ENCODE measurements at regions of chr13 and their contacts with region 1.

Region 1: DNA sequence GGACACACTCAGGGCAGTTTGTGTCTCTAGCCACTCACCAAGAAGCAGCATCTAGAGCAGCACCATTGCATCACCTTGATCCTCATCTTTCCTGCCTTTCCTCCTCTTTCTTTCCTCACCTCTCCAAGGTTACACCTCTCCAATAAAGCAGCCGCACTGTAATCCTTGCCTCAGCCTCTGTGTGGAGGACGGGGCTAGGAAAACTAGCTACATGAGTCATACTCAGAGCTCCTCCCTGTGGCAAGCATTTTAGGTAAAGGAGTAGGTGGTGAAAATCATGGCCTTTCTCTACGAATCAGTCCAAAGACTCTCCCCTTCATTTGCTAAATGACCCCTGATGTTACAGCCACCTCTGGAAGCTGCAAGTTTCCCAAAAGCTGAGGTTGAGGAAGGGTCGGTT is 108.9 kb downstream of the DNAJC15 start:
- DNase-seq: peak in 1 of 2 donors; percentile 21
- ATAC-seq: peak; percentile 28 to 84 (median 68)
- H3K4me3 ChIP-seq: no peak overlapping the region
- H3K27ac ChIP-seq: no peak overlapping the region
- H3K4me1 ChIP-seq: peaks cover 4 to 18% (median 9%) of the 10 kb centered on the region in 9 donors
- H3K27me3 ChIP-seq: peaks cover 0 to 8% (median 3%) of the 10 kb centered on the region in 7 donors
- CTCF ChIP-seq: peak in 8 of 9 donors; percentile 17 to 67 (median 47)

Region 2: GRCh38 chr13:42602906-42603305 is 529.4 kb before region 1 on chr13:
- intact Hi-C with region 1: loop called in 2 of 10 experiments (anchors 10 kb)
- DNase-seq: no peak
- ATAC-seq: no peak
- H3K4me3 ChIP-seq: no peak overlapping the region
- H3K27ac ChIP-seq: no peak overlapping the region
- H3K4me1 ChIP-seq: no peaks in the 10 kb centered on the region
- H3K27me3 ChIP-seq: peaks cover 0 to 16% (median 0%) of the 10 kb centered on the region in 7 donors
- CTCF ChIP-seq: no peak

Region 3: GRCh38 chr13:42836930-42837690 is 295.1 kb before region 1 on chr13:
- intact Hi-C with region 1: loop called in 2 of 10 experiments (anchors 5 to 10 kb)
- DNase-seq: peak in 1 of 2 donors; percentile 9
- ATAC-seq: no peak
- H3K4me3 ChIP-seq: no peak overlapping the region
- H3K27ac ChIP-seq: peak overlapping the region in 1 of 10 donors; percentile 39
- H3K4me1 ChIP-seq: peaks cover 0 to 10% (median 0%) of the 10 kb centered on the region in 9 donors
- H3K27me3 ChIP-seq: no peaks in the 10 kb centered on the region
- CTCF ChIP-seq: peak in 8 of 9 donors; percentile 8 to 61 (median 36)

Region 4: GRCh38 chr13:42969558-42970172 is 162.6 kb before region 1 on chr13:
- intact Hi-C with region 1: loop called in 7 of 10 experiments (anchors 2 to 10 kb)
- DNase-seq: peak; percentile 79 to 83
- ATAC-seq: peak; percentile 77 to 96 (median 90)
- H3K4me3 ChIP-seq: no peak overlapping the region
- H3K27ac ChIP-seq: no peak overlapping the region
- H3K4me1 ChIP-seq: peaks cover 0 to 33% (median 20%) of the 10 kb centered on the region in 9 donors
- H3K27me3 ChIP-seq: no peaks in the 10 kb centered on the region
- CTCF ChIP-seq: peak; percentile 70 to 89 (median 84)

Region 5: GRCh38 chr13:43041369-43041921 is 90.8 kb before region 1 on chr13:
- intact Hi-C with region 1: no loop called
- DNase-seq: no peak
- ATAC-seq: no peak
- H3K4me3 ChIP-seq: no peak overlapping the region
- H3K27ac ChIP-seq: no peak overlapping the region
- H3K4me1 ChIP-seq: peaks cover 0 to 62% (median 36%) of the 10 kb centered on the region in 9 donors
- H3K27me3 ChIP-seq: no peaks in the 10 kb centered on the region
- CTCF ChIP-seq: no peak